Mammary epithelial cell (primary cell): ENCODE measurements at regions of chr11 and their contacts with region 1.

Region 1: GRCh38 chr11:20483931-20484330 is 96.4 kb downstream of the PRMT3 start:
- DNase-seq: peak; percentile 69
- H3K4me3 ChIP-seq: no peak overlapping the region
- H3K27ac ChIP-seq: peak overlapping the region; percentile 61
- H3K4me1 ChIP-seq: peaks cover 14% of the 10 kb centered on the region
- H3K27me3 ChIP-seq: no peaks in the 10 kb centered on the region
- CTCF ChIP-seq: no peak

Region 2: GRCh38 chr11:20443596-20443995 is 40.3 kb before region 1 on chr11:
- CTCF ChIA-PET with region 1: no interaction called
- dilution Hi-C with region 1: no loop called
- in situ Hi-C with region 1: no loop called
- intact Hi-C with region 1: no loop called
- DNase-seq: peak; percentile 4
- H3K4me3 ChIP-seq: no peak overlapping the region
- H3K27ac ChIP-seq: no peak overlapping the region
- H3K4me1 ChIP-seq: no peaks in the 10 kb centered on the region
- H3K27me3 ChIP-seq: no peaks in the 10 kb centered on the region
- CTCF ChIP-seq: peak; percentile 39 to 43

Region 3: DNA sequence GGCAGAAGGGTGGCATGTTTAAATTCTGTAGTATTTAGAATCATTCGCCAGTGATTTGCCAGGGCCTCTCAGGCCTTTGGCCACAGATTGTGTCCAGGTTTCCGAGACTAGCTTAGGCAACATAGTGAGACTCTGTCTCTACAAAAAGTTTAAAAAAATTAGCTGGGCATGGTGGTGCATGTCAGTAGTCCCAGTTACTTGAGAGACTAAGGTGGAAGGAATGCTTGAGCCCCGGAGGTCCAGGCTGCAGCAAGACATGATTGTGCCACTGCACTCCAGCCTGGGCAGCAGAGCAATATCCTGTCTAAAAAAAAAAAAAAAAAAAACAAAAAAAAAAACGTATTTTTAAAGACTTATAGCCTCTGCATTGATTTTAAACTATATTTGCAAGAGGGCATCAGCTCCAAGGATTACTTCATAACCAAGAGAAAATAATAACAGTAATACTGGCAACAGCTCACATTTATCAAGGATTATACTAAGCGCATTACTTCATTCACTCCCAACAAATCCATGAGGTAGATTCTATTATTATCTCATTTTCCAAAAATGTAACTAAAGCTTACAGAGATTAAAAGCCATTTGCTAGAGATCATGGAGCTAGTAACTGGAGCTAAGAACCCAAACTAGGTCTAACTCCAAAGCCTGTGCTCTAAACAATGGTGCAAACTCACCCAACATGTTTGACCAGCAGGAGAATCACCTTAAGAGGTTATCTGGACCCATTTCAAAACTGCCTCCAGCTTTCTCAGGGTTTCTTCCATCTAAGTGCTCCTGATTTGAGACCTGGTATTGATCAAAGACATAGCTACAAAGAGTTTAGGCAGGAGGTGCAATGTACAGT is 82.9 kb after region 1 on chr11:
- CTCF ChIA-PET with region 1: no interaction called
- dilution Hi-C with region 1: no loop called
- in situ Hi-C with region 1: no loop called
- intact Hi-C with region 1: loop called (anchors 5 kb)
- DNase-seq: peak; percentile 87
- H3K4me3 ChIP-seq: peak overlapping the region in 1 of 3 experiments; percentile 9
- H3K27ac ChIP-seq: peak overlapping the region; percentile 77
- H3K4me1 ChIP-seq: peaks cover 21% of the 10 kb centered on the region
- H3K27me3 ChIP-seq: no peaks in the 10 kb centered on the region
- CTCF ChIP-seq: no peak